ENCODE measurements at regions of chr2 and their contacts with region 1.

Region 1: DNA sequence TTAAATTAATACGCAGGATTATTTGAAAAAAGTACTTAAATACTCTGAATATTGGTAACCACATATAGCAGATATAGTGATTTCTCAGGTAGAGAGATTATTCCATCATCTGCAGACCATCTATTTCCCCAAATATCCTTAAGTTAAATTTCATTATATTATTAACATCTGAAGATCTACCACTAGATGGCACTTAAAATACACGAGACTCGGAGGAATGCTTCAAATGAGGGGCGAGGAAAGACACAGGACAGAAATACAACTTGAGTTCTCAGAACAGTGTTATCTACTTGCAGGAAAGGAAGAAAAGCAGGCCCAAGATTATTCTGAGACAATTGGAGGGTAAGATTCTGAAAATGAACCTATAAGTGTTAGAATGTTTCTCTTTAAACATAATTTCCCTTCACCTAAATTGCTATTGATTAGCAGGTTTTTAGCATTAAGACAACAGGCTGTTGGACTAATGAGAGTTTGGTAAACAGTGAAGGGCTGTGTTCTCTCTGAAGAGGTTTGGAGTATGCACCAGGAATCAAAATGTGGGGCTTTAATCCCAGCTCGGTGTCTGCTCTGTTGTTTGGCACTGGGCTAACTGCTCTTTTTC is 76.9 kb upstream of the GCFC2 start:
- DNase-seq: no peak
- H3K4me3 ChIP-seq: no peak overlapping the region
- H3K27ac ChIP-seq: no peak overlapping the region
- H3K4me1 ChIP-seq: no peaks in the 10 kb centered on the region
- H3K27me3 ChIP-seq: no peaks in the 10 kb centered on the region
- CTCF ChIP-seq: no peak
- EP300 ChIP-seq: no peak
- POLR2A ChIP-seq: no peak

Region 2: DNA sequence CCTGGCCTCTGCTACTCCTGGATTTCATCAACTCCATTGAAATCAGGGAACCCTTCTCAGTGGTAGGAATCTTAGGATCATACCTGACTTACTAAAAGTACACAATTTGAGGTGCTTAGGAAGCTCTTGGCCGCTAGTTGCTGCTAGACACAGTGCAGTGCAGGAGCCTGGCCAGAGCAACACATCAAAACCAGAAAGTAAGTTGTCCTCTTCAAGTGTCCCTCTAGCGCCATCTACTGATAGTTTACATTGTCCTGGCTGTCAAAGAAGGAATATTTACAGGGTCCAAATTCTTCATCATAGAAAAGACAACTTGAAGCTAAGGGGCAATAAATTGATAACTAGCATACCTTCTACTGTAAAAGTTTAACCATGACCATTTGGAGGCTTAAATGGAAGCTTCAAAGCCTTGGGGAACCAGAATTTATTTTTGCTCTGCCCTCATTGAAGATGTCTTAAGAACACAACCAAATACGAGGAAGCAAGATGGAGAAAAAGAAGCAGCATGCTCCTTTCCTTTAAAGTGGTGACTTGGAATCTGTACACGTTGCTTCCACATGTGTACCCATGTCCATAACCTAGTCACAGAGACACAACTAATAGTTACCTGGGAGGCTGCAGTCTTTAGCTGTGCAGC is 812.2 kb after region 1 on chr2:
- intact Hi-C with region 1: loop called in 1 of 4 experiments (anchors 10 kb)
- DNase-seq: peak in 2 of 5 donors; percentile 18 to 29
- H3K4me3 ChIP-seq: no peak overlapping the region
- H3K27ac ChIP-seq: no peak overlapping the region
- H3K4me1 ChIP-seq: no peaks in the 10 kb centered on the region
- H3K27me3 ChIP-seq: no peaks in the 10 kb centered on the region
- CTCF ChIP-seq: no peak
- EP300 ChIP-seq: no peak
- POLR2A ChIP-seq: no peak